ENCODE measurements at regions of chr9 and their contacts with region 1.

Region 1: GRCh38 chr9:136482793-136483588 is at the start of gene SEC16A:
- DNase-seq: peak; percentile 95 to 98 (median 98)
- H3K4me3 ChIP-seq: peak within 1 kb of the TSS; percentile 81 to 95 (median 92)
- H3K27ac ChIP-seq: peak within 1 kb of the TSS; percentile 90 to 96
- H3K4me1 ChIP-seq: peaks cover 7 to 47% (median 31%) of the 10 kb centered on the region in 4 experiments
- H3K27me3 ChIP-seq: no peaks in the 10 kb centered on the region

Region 2: DNA sequence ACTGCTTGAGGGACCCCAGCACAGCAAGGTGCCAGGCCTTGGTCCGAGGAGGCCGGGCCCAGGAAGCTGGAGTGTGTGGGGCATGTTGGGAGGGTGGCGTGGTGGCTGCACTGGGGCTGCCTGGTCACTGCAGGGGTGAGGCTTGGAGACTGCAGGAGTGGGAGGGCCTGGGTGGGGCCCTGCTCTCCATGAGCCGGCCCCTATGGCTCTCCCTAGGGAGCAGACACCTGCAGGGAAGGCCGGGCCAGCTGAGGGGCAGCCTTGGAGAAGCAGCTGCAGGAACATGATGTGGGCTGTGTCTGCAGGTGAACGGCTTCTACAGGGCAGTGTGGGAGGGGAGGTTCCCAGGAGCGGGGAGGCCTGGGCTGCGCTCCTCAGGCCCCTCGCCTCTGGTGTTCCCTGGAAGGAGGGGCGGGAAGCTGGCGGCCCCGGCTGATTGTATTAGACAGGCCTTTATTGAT is 322.6 kb before region 1 on chr9:
- CTCF ChIA-PET with region 1: no interaction called
- POLR2A ChIA-PET with region 1: no interaction called
- DNase-seq: no peak
- H3K4me3 ChIP-seq: no peak overlapping the region
- H3K27ac ChIP-seq: no peak overlapping the region
- H3K4me1 ChIP-seq: peaks cover 0 to 5% (median 2%) of the 10 kb centered on the region in 4 experiments
- H3K27me3 ChIP-seq: peaks cover 0 to 12% (median 2%) of the 10 kb centered on the region in 5 experiments

Region 3: DNA sequence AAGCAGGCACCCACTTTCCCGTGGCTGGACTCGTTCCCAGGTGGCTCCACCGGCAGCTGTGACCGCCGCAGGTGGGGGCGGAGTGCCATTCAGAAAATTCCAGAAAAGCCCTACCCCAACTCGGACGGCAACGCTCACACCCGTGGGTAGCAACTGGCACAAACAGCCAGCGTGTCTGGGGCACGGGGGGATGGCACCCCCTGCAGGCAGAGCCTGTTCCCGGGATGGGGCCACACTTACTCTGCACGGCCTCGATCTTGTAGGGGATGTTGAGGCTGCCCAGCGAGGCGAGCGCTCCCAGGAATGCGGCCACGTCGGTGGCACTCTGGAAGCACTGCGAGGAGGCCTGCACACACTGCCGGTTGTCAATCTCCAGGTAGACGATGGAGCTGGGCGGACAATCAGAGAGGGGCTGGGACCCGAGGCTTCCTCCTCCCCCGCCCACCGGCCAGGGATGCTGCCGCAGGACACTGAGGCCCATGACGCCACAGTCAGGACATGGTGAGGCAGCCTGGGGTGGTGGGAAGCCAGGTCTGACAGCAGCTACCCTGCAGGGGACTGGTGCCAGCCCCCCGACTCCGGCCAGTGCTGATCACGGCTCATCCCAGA is 20.1 kb after region 1 on chr9:
- CTCF ChIA-PET with region 1: interaction called, 27 read pairs
- POLR2A ChIA-PET with region 1: no interaction called
- DNase-seq: no peak
- H3K4me3 ChIP-seq: no peak overlapping the region
- H3K27ac ChIP-seq: no peak overlapping the region
- H3K4me1 ChIP-seq: no peaks in the 10 kb centered on the region
- H3K27me3 ChIP-seq: no peaks in the 10 kb centered on the region

Region 4: GRCh38 chr9:136527721-136528691 is 45.0 kb after region 1 on chr9:
- CTCF ChIA-PET with region 1: interaction called, 93 read pairs
- POLR2A ChIA-PET with region 1: interaction called, 6 read pairs
- DNase-seq: peak in 2 of 3 donors; percentile 51 to 65
- H3K4me3 ChIP-seq: peak overlapping the region in 1 of 7 experiments; percentile 64
- H3K27ac ChIP-seq: peak overlapping the region in 1 of 2 experiments; percentile 60
- H3K4me1 ChIP-seq: peaks cover 2 to 70% (median 57%) of the 10 kb centered on the region in 4 experiments
- H3K27me3 ChIP-seq: no peaks in the 10 kb centered on the region

Region 5: DNA sequence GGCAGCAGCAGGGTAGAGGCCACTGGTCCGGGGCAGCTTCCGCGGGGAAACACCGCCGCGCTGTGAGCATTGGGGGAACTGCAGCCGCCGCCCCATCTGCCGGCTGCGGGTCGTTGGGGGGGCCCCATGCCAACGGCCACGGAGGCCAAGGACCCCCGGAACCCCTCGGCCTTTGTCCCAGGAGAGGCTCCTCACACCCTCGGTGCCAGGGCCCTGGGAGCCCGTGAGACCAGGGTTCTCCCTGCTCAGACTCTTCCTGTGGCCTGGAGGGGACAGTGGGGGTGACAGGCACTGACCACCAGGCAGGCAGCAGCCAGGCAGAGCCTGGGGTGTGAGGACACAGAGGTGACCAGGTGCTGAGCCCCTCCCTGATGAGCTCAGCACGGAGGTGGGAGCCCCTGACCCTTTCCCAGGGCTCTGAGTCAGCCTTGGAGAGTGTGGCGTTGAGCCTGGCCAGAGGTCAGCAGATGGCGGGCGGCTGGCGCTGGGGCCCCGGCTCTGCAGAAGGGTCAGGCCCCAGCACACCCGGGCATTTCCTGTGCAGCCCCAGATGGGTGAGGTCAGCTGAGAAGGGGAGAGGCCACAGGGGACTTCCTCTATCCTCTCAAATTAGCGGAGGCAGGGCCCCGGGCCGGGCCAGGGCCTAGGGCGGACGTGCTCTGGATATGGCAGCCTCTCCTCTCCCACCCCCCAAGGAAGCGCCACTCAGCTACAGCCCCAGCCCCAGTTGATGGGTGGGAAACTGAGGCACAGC is 161.8 kb after region 1 on chr9:
- CTCF ChIA-PET with region 1: interaction called, 62 read pairs
- POLR2A ChIA-PET with region 1: interaction called, 3 read pairs
- DNase-seq: peak in 2 of 3 donors; percentile 70 to 78
- H3K4me3 ChIP-seq: peak overlapping the region in 5 of 7 experiments; percentile 19 to 65 (median 57)
- H3K27ac ChIP-seq: peak overlapping the region; percentile 40 to 82
- H3K4me1 ChIP-seq: peaks cover 3 to 72% (median 67%) of the 10 kb centered on the region in 4 experiments
- H3K27me3 ChIP-seq: no peaks in the 10 kb centered on the region

Region 6: GRCh38 chr9:136671646-136672430 is 188.8 kb after region 1 on chr9:
- CTCF ChIA-PET with region 1: interaction called, 16 read pairs
- POLR2A ChIA-PET with region 1: no interaction called
- DNase-seq: peak in 2 of 3 donors; percentile 60 to 65
- H3K4me3 ChIP-seq: no peak overlapping the region
- H3K27ac ChIP-seq: no peak overlapping the region
- H3K4me1 ChIP-seq: peaks cover 0 to 59% (median 44%) of the 10 kb centered on the region in 4 experiments
- H3K27me3 ChIP-seq: no peaks in the 10 kb centered on the region